Activated B cell treated with CpG ODN at 0.5 μM for 24 hours (primary cell): ENCODE measurements at regions of chr18 and their contacts with region 1.

Region 1: DNA sequence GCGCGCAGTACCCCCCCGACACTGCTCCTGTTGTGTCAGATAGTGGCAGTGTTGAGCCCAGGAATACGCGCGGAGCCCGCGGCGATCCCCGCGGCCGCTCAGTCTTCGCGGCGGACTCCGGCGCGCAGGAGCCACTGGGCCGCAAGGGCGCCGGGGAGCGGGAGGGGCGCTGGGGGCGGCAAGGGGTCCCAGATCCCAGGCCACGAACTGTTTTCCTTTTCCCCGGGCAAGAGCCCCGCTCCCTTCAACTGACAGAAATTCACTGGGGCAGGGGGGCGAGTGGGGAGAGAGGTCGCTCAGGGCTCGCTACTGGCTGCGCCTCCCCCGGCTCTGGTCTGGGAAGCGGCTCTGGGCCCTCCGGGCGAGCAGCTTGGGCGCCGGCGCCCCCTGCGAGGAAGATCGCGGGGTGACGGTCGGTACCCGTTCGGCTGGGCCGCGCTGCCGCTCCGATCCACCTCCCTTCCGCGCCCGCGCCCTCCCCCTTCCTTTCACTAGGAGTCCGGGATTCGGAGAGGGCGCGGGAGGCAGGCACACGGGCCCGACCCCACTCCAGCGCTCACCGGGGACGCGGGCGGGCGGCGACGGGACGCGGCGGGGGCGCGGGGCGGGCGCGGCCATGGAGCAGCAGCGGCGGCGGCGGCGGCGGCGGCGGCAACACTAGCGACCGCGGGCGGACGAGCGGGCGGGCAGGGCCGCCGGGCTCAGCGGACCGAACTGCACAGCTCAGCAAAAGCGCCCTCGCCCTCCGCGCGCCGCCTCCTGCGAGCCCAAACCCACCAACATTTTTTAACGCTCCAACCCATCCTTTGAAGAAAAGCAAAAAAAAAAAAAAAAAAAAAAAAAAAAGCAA is 1.4 kb upstream of the SETBP1 start:
- DNase-seq: peak; percentile 83
- ATAC-seq: peak; percentile 81
- H3K4me3 Mint-ChIP-seq: peak overlapping the region; percentile 75
- H3K27ac Mint-ChIP-seq: peak overlapping the region; percentile 63
- H3K4me1 Mint-ChIP-seq: peaks cover 9% of the 10 kb centered on the region
- H3K27me3 Mint-ChIP-seq: no peaks in the 10 kb centered on the region
- CTCF ChIP-seq: no peak

Region 2: GRCh38 chr18:44700652-44701051 is 21.4 kb after region 1 on chr18:
- CTCF ChIA-PET with region 1: interaction called, 3 read pairs
- POLR2A ChIA-PET with region 1: interaction called, 21 read pairs
- intact Hi-C with region 1: loop called (anchors 1 kb)
- DNase-seq: no peak
- ATAC-seq: peak; percentile 98
- H3K4me3 Mint-ChIP-seq: no peak overlapping the region
- H3K27ac Mint-ChIP-seq: peak overlapping the region; percentile 79
- H3K4me1 Mint-ChIP-seq: peaks cover 74% of the 10 kb centered on the region
- H3K27me3 Mint-ChIP-seq: no peaks in the 10 kb centered on the region
- CTCF ChIP-seq: no peak

Region 3: GRCh38 chr18:44799907-44800421 is 120.7 kb after region 1 on chr18:
- CTCF ChIA-PET with region 1: interaction called, 3 read pairs
- POLR2A ChIA-PET with region 1: interaction called, 14 read pairs
- intact Hi-C with region 1: loop called (anchors 1 kb)
- DNase-seq: no peak
- ATAC-seq: peak; percentile 43
- H3K4me3 Mint-ChIP-seq: peak overlapping the region; percentile 61
- H3K27ac Mint-ChIP-seq: peak overlapping the region; percentile 86
- H3K4me1 Mint-ChIP-seq: peaks cover 94% of the 10 kb centered on the region
- H3K27me3 Mint-ChIP-seq: no peaks in the 10 kb centered on the region
- CTCF ChIP-seq: no peak

Region 4: GRCh38 chr18:44895176-44895798 is 216.0 kb after region 1 on chr18:
- CTCF ChIA-PET with region 1: interaction called, 12 read pairs
- POLR2A ChIA-PET with region 1: interaction called, 16 read pairs
- intact Hi-C with region 1: loop called (anchors 1 kb)
- DNase-seq: no peak
- ATAC-seq: peak; percentile 62
- H3K4me3 Mint-ChIP-seq: no peak overlapping the region
- H3K27ac Mint-ChIP-seq: no peak overlapping the region
- H3K4me1 Mint-ChIP-seq: peaks cover 47% of the 10 kb centered on the region
- H3K27me3 Mint-ChIP-seq: no peaks in the 10 kb centered on the region
- CTCF ChIP-seq: no peak

Region 5: GRCh38 chr18:45026162-45026561 is 346.9 kb after region 1 on chr18:
- CTCF ChIA-PET with region 1: interaction called, 3 read pairs
- POLR2A ChIA-PET with region 1: interaction called, 7 read pairs
- intact Hi-C with region 1: loop called (anchors 1 kb)
- DNase-seq: no peak
- ATAC-seq: no peak
- H3K4me3 Mint-ChIP-seq: no peak overlapping the region
- H3K27ac Mint-ChIP-seq: no peak overlapping the region
- H3K4me1 Mint-ChIP-seq: peaks cover 39% of the 10 kb centered on the region
- H3K27me3 Mint-ChIP-seq: no peaks in the 10 kb centered on the region
- CTCF ChIP-seq: no peak

Region 6: DNA sequence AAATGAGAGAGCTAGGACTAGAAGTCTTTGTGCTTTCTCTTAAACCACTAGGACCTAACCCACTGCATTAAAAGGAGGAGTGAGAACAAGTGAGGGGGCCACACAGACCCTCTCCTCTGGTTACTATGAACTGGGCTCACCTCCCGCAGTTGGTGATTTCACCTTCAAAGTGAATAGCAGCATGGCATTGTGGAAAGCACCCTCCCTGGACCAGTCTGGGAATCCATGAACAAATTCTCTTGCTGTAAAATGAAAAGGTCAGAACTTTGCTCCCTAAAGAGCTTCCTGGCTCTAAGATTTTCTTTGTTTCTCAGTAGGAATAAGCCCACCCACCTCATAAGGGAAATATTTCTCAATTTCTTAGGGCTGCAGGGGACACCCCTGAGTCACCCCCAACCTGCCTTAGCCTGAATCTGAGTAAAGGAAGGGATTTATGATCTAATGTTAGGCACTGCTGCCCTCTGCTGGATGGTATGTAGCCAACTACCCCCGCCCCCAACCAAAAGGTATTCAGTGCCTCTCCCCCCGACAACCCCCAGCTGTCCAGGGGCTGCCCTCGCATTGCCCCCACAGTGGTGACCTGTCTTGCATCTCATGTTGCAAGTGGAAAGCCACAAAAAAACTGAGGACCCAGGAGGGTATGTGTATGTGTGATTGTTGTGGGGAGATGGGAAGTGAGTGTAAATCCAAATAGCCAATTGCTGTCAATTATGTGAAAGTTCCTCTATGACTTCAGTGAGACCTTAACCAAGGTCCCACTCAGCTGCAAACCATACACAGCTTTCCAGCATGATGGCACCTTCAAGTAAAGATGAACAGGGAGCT is 705.1 kb after region 1 on chr18:
- CTCF ChIA-PET with region 1: interaction called, 3 read pairs
- POLR2A ChIA-PET with region 1: no interaction called
- intact Hi-C with region 1: loop called (anchors 1 kb)
- DNase-seq: peak; percentile 27
- ATAC-seq: peak; percentile 62
- H3K4me3 Mint-ChIP-seq: no peak overlapping the region
- H3K27ac Mint-ChIP-seq: no peak overlapping the region
- H3K4me1 Mint-ChIP-seq: no peaks in the 10 kb centered on the region
- H3K27me3 Mint-ChIP-seq: peaks cover 12% of the 10 kb centered on the region
- CTCF ChIP-seq: no peak